Right ventricle myocardium inferior (tissue), 1 donor: ENCODE measurements at regions of chr12 and their contacts with region 1.

Region 1: DNA sequence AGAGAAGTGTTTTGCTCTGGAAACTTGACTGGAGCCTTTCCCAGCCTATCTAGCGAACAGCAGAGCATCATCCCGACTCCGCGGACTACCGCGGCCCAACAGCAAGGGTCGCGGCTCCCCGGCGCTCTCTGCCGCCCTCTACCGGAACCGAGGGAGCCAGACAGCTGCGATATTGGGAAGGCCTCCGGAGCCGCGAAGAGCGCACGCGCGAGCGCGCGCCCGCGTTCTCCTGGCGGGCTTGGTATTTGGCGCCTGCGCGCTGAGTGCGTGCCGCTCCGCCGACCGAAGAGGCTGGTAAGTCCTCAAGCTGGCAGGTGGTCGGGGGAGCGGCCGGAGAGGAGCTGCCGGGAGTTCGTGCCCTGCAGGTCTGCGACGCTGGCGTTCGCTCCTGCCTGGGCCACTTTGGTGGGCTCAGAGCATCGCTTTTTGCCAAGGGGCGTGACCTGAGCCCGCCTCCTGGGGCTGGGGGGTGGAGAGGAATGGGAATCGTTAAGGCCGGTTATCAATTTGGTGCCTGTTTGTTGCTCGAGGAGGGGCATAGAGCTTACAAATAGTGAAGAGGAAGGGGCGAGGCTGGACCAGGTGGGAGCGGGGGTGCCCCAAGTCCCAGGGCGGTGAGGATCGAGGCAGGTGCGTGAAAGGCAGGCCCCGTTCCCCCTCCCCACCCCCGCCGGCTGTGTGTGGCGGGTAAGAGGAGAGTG is at the start of gene TMEM106C:
- DNase-seq: peak; percentile 95
- ATAC-seq: peak; percentile 95
- total RNA-seq, gene TMEM106C: 45.6 TPM

Region 2: GRCh38 chr12:48021485-48022179 is 58.1 kb after region 1 on chr12:
- intact Hi-C with region 1: loop called (anchors 5 kb)
- DNase-seq: no peak
- ATAC-seq: peak; percentile 51

Region 3: GRCh38 chr12:48165094-48165981 is 201.8 kb after region 1 on chr12:
- intact Hi-C with region 1: loop called (anchors 5 kb)
- DNase-seq: no peak
- ATAC-seq: peak; percentile 57